Right cardiac atrium (tissue), 5 donors: ENCODE measurements at regions of chr9 and their contacts with region 1.

Region 1: DNA sequence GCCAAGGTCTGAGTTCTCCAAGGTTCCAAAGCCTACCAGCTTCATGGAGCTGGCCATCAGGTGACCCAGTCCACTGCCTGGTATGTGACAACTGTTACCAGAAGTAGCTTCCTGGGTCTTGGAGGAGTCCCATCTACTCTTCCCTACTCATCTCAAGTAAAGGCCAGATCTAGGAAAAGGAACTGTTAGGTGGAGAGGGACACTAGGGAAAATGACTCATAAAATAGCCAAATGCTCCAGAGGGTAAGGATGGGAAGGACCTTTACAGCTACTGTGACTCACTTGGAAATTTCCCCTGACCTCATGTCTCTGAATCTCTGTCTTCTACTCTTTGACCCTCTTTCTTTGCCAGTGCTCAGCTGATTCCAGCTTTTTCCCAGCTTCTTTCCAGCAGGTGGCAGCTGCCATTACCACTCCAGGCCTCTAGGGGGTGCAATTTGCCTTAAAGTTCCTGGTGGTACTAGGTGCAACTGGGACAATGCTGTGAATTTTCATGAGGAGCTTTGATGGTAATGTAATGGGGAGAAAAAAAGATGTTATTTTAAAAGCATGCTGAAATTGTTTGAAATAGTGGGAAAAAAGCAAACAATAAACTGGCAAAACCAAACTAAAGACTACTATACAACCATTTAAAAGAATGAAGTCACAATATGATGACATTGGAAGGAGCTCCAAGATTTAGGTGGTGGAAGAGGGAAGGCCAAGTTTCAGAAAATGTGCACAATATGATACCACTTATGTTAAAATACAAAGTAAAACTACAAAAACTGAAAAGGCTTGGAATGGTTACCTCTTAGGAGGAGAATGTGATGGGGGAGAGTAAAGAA is 27.1 kb upstream of the MYORG start:
- DNase-seq: peak; percentile 56 to 85 (median 82)
- ATAC-seq: peak in 1 of 2 donors; percentile 60
- H3K4me3 ChIP-seq: no peak overlapping the region
- H3K27ac ChIP-seq: no peak overlapping the region
- H3K4me1 ChIP-seq: no peaks in the 10 kb centered on the region
- H3K27me3 ChIP-seq: no peaks in the 10 kb centered on the region

Region 2: GRCh38 chr9:34522971-34523797 is 119.4 kb after region 1 on chr9 and contains the start of gene ENHO:
- intact Hi-C with region 1: no loop called
- DNase-seq: peak; percentile 91 to 96 (median 95)
- ATAC-seq: peak; percentile 97 to 99
- H3K4me3 ChIP-seq: peak within 1 kb of the TSS; percentile 49
- H3K27ac ChIP-seq: no peak within 1 kb of the TSS
- H3K4me1 ChIP-seq: no peaks in the 10 kb centered on the region
- H3K27me3 ChIP-seq: no peaks in the 10 kb centered on the region
- total RNA-seq, gene ENHO: 0.67 to 2.3 (median 1.6) TPM

Region 3: GRCh38 chr9:34546834-34547827 is 143.4 kb after region 1 on chr9:
- intact Hi-C with region 1: loop called in 1 of 4 experiments (anchors 10 kb)
- DNase-seq: peak; percentile 75 to 88 (median 82)
- ATAC-seq: peak; percentile 59 to 73
- H3K4me3 ChIP-seq: no peak overlapping the region
- H3K27ac ChIP-seq: no peak overlapping the region
- H3K4me1 ChIP-seq: no peaks in the 10 kb centered on the region
- H3K27me3 ChIP-seq: no peaks in the 10 kb centered on the region

Region 4: DNA sequence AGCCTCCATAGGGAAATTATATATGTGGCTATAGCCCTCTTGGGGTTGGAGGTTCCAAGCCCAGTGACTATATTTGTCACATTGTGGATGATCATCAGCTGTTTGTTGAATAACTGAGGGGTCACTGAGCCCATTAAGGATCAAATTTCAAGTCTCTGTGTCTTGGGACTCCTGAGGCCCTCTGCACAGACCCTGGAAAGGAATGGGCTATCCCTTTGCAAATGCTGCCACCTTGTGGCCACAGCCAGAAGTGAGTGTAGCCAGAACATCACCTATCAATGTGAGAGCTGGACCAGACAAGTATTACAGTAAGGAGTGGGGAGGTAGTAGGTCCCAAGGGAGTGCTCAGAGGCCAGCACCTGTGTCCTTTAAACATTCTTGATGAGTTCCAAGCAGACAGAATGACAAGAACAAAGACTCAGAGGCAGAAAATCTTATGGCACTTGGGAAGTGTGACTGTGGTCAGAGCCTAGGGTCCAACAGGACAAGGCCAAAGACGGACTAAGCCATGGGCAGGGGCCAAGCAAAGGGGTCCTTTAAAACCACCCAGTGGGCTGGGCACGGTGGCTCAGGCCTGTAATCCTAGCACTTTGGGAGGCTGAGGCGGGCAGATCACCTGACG is 200.0 kb after region 1 on chr9:
- intact Hi-C with region 1: loop called in 2 of 4 experiments (anchors 5 to 10 kb)
- DNase-seq: peak; percentile 79 to 96 (median 90)
- ATAC-seq: peak; percentile 86 to 89
- H3K4me3 ChIP-seq: no peak overlapping the region
- H3K27ac ChIP-seq: no peak overlapping the region
- H3K4me1 ChIP-seq: peaks cover 3% of the 10 kb centered on the region
- H3K27me3 ChIP-seq: no peaks in the 10 kb centered on the region